ENCODE measurements at regions of chr13 and their contacts with region 1.

Region 1: GRCh38 chr13:32381539-32381938 is 46.4 kb downstream of the N4BP2L1 start:
- DNase-seq: peak in 1 of 10 donors; percentile 19

Region 2: DNA sequence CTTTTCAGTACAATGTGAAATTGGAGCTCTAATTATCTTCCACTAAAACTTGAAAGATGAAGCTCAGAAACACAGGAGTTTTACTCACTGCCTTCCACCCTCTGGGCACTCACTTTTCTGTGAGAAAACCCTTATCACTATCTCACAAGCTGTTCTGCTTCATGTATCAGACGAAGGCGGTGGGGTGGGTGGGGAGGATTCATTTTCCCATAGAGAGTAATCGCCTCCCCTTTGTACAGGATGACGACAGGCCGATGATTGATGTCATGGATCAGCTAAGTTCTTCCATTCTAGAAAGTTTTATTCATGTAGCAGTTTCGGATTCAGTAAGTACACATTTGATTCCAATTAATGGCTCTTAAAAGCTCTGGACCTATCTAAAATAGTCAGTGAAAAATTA is 206.2 kb before region 1 on chr13:
- intact Hi-C with region 1: no loop called
- DNase-seq: no peak

Region 3: GRCh38 chr13:32323912-32324311 is 57.6 kb before region 1 on chr13:
- intact Hi-C with region 1: no loop called
- DNase-seq: no peak

Region 4: GRCh38 chr13:32443111-32443510 is 61.6 kb after region 1 on chr13:
- intact Hi-C with region 1: loop called (anchors 5 kb)
- DNase-seq: peak in 1 of 10 donors; percentile 30

Region 5: GRCh38 chr13:32581177-32581786 is 199.7 kb after region 1 on chr13:
- intact Hi-C with region 1: loop called (anchors 1 kb)
- DNase-seq: no peak

Measured in posterior cingulate gyrus (tissue), 11 donors.